K562 (cell line): ENCODE measurements at regions of chr9 and their contacts with region 1.

Region 1: GRCh38 chr9:36250079-36250478 is 8.2 kb downstream of the GNE start:
- DNase-seq: no peak
- ATAC-seq: no peak
- H3K4me3 ChIP-seq: no peak overlapping the region
- H3K27ac ChIP-seq: no peak overlapping the region
- H3K4me1 ChIP-seq: no peaks in the 10 kb centered on the region; a peak in 1 of 5 replicates
- H3K27me3 ChIP-seq: no peaks in the 10 kb centered on the region
- CTCF ChIP-seq: no peak
- EP300 ChIP-seq: no peak
- POLR2A ChIP-seq: no peak
- RAD21 ChIP-seq: no peak

Region 2: DNA sequence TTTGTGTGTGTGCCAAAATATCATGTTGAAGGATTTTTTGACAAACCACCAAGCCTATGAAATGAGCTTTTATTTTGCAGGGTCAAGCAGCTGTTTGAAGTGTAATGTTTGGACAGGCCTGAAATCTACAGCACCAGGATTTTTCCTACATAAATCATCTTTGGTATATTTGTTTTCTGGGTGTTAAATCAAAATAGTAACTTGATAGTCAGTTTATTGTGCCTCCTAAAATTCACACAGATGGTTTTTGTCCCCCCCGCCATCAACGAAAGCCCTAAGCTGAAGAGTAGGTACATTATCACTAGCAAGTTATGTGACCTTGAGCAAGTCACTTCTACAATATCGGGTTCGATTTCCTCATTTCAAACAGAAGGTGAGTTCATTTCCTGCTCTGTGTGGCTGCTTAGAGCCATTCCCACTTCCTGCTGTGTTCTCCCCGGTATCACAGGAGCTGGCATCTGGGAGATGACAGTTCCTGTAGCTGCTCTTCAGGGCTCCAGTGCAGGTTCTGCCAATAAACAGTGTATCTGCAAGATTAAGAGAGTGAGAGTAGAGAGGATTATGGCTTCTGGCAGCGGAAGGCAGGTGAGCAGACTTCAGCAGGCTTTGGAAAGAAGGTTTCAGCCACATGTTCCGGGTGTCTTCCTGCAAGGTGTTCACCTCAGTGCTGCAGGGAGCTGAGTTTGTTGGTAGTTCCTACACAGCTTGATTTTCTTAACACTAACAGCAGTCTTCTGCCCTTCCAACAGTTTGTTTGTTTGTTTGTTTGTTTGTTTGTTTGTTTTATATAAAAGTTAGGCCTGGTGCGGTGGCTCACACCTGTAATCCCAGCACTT is 56.6 kb after region 1 on chr9:
- CTCF ChIA-PET with region 1: no interaction called
- POLR2A ChIA-PET with region 1: no interaction called
- in situ Hi-C with region 1: no loop called
- intact Hi-C with region 1: no loop called
- DNase-seq: no peak
- ATAC-seq: no peak
- H3K4me3 ChIP-seq: no peak overlapping the region
- H3K27ac ChIP-seq: no peak overlapping the region
- H3K4me1 ChIP-seq: peaks cover 0 to 3% of the 10 kb centered on the region in 2 experiments; a peak in 2 of 5 replicates
- H3K27me3 ChIP-seq: no peaks in the 10 kb centered on the region
- CTCF ChIP-seq: no peak
- EP300 ChIP-seq: no peak
- POLR2A ChIP-seq: no peak
- RAD21 ChIP-seq: no peak

Region 3: DNA sequence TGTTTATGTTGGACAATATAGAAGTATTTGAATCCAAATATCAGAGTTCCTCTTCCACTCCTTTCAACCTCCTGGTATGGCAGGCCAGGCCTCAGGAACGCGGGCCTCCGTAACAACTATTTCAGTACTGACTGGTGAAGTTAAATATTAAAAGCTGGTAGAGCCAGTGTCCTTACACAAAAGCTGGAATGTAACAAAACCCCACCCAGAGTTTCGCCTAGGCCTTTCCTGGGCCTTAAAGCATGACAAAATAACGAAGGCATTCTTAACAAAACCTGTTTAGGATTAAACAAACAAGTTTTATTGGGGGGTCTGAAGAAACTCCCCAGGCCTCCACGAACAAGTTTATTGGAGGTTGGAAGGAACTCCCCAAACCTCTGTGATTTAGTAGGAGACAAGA is 69.7 kb after region 1 on chr9:
- CTCF ChIA-PET with region 1: no interaction called
- POLR2A ChIA-PET with region 1: no interaction called
- in situ Hi-C with region 1: loop called (anchors 5 kb)
- intact Hi-C with region 1: no loop called
- DNase-seq: no peak
- ATAC-seq: no peak
- H3K4me3 ChIP-seq: no peak overlapping the region
- H3K27ac ChIP-seq: no peak overlapping the region
- H3K4me1 ChIP-seq: peaks cover 0 to 3% of the 10 kb centered on the region in 2 experiments; a peak in 1 of 5 replicates
- H3K27me3 ChIP-seq: no peaks in the 10 kb centered on the region
- CTCF ChIP-seq: no peak
- EP300 ChIP-seq: no peak
- POLR2A ChIP-seq: no peak
- RAD21 ChIP-seq: no peak